ENCODE measurements at regions of chr3 and their contacts with region 1.

Region 1: GRCh38 chr3:52278510-52279069 is at the start of gene WDR82:
- DNase-seq: peak; percentile 98
- ATAC-seq: peak; percentile 76
- H3K4me3 Mint-ChIP-seq: peak within 1 kb of the TSS; percentile 99
- H3K27ac Mint-ChIP-seq: peak within 1 kb of the TSS; percentile 98
- H3K4me1 Mint-ChIP-seq: peaks cover 61% of the 10 kb centered on the region
- H3K27me3 Mint-ChIP-seq: no peaks in the 10 kb centered on the region
- total RNA-seq, gene WDR82: 114 to 132 TPM

Region 2: GRCh38 chr3:52238761-52239701 is 39.6 kb before region 1 on chr3 and contains the start of gene TWF2:
- CTCF ChIA-PET with region 1: interaction called, 176 read pairs
- DNase-seq: peak; percentile 87
- ATAC-seq: peak; percentile 86
- H3K4me3 Mint-ChIP-seq: peak within 1 kb of the TSS; percentile 96
- H3K27ac Mint-ChIP-seq: peak within 1 kb of the TSS; percentile 95
- H3K4me1 Mint-ChIP-seq: peaks cover 68% of the 10 kb centered on the region
- H3K27me3 Mint-ChIP-seq: no peaks in the 10 kb centered on the region
- total RNA-seq, gene TWF2: 110 to 131 TPM

Region 3: GRCh38 chr3:52253314-52254304 is 25.0 kb before region 1 on chr3:
- CTCF ChIA-PET with region 1: interaction called, 63 read pairs
- DNase-seq: peak; percentile 90
- ATAC-seq: peak; percentile 90
- H3K4me3 Mint-ChIP-seq: peak overlapping the region; percentile 75
- H3K27ac Mint-ChIP-seq: peak overlapping the region; percentile 100
- H3K4me1 Mint-ChIP-seq: peaks cover 89% of the 10 kb centered on the region
- H3K27me3 Mint-ChIP-seq: no peaks in the 10 kb centered on the region

Region 4: DNA sequence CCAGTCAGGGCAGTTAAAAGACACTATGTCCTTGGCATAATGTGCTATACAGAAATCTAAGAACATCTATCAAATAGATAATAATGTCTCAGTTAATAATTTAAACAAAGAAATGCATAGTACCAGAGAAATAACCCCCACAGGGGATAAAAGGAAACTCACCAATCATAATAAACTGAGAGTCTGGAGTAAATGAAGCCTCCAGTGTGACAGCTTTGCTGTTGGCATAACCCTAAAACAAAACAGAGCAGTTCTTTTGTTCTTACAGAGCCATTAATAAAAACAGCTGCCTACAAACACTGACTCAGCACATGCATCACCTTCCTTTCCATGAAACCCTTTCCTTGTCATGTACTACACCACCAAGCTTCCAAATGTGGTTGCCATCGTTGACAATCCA is 19.6 kb before region 1 on chr3:
- CTCF ChIA-PET with region 1: interaction called, 63 read pairs
- DNase-seq: no peak
- ATAC-seq: no peak
- H3K4me3 Mint-ChIP-seq: no peak overlapping the region
- H3K27ac Mint-ChIP-seq: no peak overlapping the region
- H3K4me1 Mint-ChIP-seq: peaks cover 79% of the 10 kb centered on the region
- H3K27me3 Mint-ChIP-seq: no peaks in the 10 kb centered on the region

Region 5: GRCh38 chr3:52291508-52292181 is 13.1 kb after region 1 on chr3:
- CTCF ChIA-PET with region 1: interaction called, 52 read pairs
- DNase-seq: peak; percentile 75
- ATAC-seq: no peak
- H3K4me3 Mint-ChIP-seq: no peak overlapping the region
- H3K27ac Mint-ChIP-seq: peak overlapping the region; percentile 76
- H3K4me1 Mint-ChIP-seq: peaks cover 35% of the 10 kb centered on the region
- H3K27me3 Mint-ChIP-seq: no peaks in the 10 kb centered on the region